ENCODE measurements at regions of chr20 and their contacts with region 1.

Region 1: DNA sequence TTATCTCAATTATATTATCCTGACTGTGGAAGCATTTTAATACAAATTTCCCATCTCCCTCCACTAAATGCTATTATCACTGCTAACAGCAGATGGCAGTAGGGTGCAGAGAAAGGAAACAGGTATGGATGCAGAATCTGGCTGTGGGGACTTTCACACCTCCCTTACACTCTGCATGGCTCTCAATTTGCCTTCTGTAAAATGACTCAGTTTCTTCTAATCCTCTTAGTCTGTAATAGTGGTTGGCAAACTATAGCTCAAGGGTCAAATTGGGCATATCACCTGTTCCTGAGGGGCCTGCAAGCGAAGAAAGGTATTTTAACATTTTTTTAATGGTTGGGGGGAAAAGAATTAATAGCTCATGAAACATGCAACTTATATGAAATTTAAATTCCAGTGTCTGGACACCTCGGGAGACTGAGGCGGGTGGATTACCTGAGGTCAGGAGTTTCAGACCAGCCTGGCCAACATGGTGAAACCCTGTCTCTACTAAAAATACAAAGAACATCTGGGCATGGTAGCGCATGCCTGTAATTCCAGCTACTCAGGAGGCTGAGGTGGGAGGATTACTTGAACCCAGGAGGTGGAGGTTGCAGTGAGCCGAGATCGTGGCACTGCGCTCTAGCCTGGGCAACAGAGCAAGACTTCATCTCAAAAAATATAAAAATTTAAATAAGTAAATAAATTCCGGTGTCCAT is 83.5 kb downstream of the ZMYND8 start:
- DNase-seq: no peak

Region 2: GRCh38 chr20:47066484-47067186 is 206.4 kb before region 1 on chr20:
- intact Hi-C with region 1: no loop called
- DNase-seq: no peak

Region 3: GRCh38 chr20:47312020-47312662 is 39.1 kb after region 1 on chr20:
- intact Hi-C with region 1: loop called (anchors 5 kb)
- DNase-seq: no peak

Region 4: GRCh38 chr20:47356526-47357295 is 83.7 kb after region 1 on chr20 and contains the start of gene ZMYND8:
- intact Hi-C with region 1: loop called (anchors 5 kb)
- DNase-seq: peak; percentile 96
- total RNA-seq, gene ZMYND8: 25.7 TPM

Region 5: DNA sequence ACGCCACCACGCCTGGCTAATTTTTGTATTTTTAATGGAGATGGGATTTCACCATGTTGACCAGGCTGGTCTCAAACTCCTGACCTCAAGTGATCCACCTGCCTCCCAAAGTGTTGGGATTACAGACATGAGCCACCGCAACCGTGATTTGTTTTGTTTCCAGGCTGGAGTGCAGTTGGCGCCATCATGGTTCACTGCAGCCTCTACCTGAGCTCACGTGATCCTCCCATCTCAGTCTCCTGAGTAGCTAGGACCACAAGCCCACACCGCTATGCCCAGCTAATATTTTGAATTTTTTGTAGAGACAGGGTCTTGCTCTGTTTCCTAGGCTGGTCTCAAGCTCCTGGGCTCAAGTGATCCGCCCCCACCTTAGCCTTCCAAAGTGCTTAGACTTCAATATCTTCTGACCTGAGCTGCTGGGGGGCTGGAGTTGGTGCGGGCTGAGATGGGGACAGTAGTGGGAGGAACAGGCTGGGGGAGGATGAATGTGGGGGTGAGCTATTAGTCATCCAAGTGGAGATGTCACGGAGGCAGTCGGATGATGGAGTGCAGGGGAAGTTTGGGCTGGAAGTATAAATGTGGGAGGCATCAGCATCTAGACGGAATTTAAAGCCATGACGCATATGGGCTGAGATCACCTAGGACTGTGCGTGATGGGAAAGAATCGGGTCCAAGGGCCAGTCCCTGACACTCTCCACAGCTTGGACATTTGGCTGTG is 106.5 kb after region 1 on chr20:
- intact Hi-C with region 1: loop called (anchors 1 kb)
- DNase-seq: no peak

Region 6: GRCh38 chr20:47501483-47502270 is 228.6 kb after region 1 on chr20 and contains the start of gene NCOA3:
- intact Hi-C with region 1: loop called (anchors 10 kb)
- DNase-seq: peak; percentile 97
- total RNA-seq, gene NCOA3: 18.6 TPM

Region 7: GRCh38 chr20:47620808-47621805 is 348.1 kb after region 1 on chr20:
- intact Hi-C with region 1: loop called (anchors 5 kb)
- DNase-seq: no peak